ENCODE measurements at regions of chr1 and their contacts with region 1.

Region 1: DNA sequence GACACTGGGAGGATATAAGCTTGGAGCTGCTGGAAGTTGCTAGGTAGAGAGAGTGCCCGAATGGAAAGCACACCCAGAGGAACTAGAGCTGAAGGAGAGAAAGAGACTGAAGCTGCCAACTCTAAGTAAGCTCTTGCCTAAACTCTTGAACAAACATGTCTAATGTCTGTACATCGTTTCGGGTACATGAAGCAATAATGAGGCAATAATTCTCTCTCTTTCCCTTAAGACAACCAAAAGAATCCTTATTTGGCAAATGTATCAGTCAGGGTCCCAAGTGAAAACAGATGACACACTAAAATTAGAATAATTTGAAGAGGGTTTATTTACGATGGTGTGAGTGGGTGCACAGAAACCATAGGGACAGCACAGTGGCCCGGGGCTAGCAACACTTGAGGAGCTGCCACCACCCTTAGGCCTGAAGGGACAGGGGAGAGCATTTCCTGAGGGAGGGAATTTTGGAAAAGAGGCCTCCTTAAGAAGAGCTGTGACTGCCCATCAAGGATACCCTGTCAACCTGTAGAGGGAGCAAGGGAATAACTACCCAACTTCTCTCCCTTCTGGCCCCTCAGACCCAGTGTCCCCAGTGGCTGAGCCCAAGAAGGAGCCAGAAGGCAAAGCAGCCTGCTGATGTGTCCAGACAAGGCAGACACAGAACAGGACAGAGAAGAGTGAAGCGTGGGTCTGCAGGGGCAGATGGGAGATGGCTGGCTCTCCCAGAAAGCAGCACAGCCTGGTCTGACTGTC is 36.1 kb upstream of the KHDRBS1 start:
- DNase-seq: no peak
- ATAC-seq: peak; percentile 61 to 71

Region 2: DNA sequence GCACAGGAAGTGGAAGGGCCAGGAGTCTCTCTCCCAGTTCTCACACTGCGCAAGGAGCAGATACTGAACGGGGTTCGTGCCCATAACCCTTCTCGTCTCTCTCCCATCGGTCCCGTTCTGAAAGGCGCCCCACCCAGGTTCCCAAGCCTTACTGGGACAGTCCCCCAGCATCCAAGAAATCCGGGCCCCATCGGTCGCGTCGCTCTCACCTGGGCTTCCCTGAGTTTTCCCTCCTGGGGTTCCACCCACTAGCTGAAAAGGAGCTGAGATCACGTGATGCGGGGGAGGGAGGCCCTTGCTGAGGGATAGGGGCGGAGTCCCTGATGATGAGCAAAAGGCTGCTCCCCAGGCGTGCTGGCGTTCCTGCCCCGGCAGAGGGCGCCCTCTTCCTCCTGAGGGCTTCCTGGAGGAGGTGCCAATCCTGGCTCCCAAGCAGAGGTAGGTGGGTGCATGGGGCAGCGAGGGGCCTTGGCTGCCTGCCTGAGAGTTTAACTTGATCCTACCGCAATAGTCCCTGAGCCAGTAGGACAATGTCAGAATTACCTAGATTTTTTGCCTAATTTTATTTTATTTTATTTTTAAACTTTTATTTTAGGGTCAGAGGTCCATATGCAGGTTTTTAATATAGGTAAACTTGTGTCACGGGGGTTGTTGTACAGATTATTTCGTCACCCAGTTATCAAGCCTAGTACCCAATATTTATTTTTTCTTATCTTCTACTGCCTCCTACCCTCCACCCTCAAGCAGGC is 161.6 kb before region 1 on chr1 and contains the start of gene SPOCD1:
- intact Hi-C with region 1: no loop called
- DNase-seq: peak; percentile 84
- ATAC-seq: peak; percentile 70 to 85
- total RNA-seq, gene SPOCD1: 0.18 to 1.2 TPM

Region 3: GRCh38 chr1:32013386-32014198 is 36.0 kb after region 1 on chr1 and contains the start of gene KHDRBS1:
- intact Hi-C with region 1: no loop called
- DNase-seq: peak; percentile 99
- ATAC-seq: peak; percentile 94 to 96
- total RNA-seq, gene KHDRBS1: 57.2 to 76.6 TPM

Region 4: GRCh38 chr1:32063261-32063681 is 85.7 kb after region 1 on chr1:
- intact Hi-C with region 1: loop called in 1 of 2 experiments (anchors 10 kb)
- DNase-seq: no peak
- ATAC-seq: peak; percentile 44 to 48

Measured in left cardiac atrium (tissue), 4 donors.